Activated naive CD4-positive, alpha-beta T cell treated with anti-CD3 and anti-CD28 coated beads for 36 hours (primary cell): ENCODE measurements at regions of chr1 and their contacts with region 1.

Region 1: DNA sequence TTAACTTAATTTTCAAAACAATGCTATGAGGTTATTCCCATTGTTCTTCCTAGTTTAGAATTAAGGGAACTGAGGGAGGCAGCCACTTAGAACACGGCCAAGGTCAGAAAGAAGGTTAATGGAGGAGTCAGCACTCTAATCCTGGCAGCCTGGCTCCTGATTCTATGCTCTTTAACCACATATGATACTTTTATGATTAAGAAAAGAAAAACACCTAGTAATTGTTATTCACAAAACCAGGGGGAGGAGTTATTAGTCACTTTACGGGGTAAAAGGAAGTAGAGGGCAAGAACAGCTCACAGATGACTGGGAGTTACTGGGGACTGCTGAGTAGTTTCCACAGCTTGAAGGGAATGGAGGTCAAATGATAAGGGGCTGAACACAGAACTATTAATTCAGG is 38.6 kb downstream of the GADD45A start:
- DNase-seq: peak; percentile 58
- H3K4me3 Mint-ChIP-seq: no peak overlapping the region
- H3K27ac Mint-ChIP-seq: no peak overlapping the region
- H3K4me1 Mint-ChIP-seq: peaks cover 8% of the 10 kb centered on the region
- H3K27me3 Mint-ChIP-seq: no peaks in the 10 kb centered on the region

Region 2: DNA sequence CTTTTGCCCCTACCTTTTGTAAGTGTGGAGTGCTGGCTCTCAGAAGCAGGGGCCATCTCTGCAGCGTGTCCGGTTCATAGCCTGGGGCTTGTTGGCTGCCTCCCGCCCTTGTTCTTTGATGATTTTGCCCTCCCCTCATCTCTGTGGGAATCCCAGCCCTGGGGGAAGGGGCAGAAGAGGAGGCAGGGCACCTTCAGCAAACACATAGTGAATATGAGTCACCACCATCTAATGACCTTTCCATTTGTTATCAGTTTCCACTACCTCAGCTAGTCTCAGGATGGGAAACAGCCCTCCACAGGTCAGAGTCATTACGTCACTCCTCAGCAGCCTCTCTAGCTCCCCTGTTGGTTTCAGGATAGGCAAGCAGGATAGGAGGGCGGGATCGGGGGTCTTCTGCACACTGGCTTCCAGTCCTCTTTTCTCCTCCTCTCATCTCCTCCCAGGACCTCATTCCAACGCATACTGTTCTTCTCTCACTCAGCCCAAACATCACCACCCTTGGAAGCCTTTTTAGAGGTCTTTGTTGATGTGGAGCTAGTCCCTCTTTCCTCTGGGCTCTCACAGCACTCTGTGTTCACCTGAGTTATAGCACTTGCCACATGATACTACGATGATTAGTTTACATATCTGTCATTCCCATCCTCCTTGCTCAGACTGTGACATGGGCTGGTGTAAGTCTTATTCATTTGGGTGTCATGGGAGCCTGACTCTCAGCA is 22.8 kb before region 1 on chr1:
- CTCF ChIA-PET with region 1: no interaction called
- intact Hi-C with region 1: loop called (anchors 1 kb)
- DNase-seq: peak; percentile 50
- H3K4me3 Mint-ChIP-seq: no peak overlapping the region
- H3K27ac Mint-ChIP-seq: no peak overlapping the region
- H3K4me1 Mint-ChIP-seq: peaks cover 13% of the 10 kb centered on the region
- H3K27me3 Mint-ChIP-seq: no peaks in the 10 kb centered on the region

Region 3: GRCh38 chr1:67735806-67736627 is 12.4 kb after region 1 on chr1:
- CTCF ChIA-PET with region 1: no interaction called
- intact Hi-C with region 1: loop called (anchors 1 kb)
- DNase-seq: peak; percentile 73
- H3K4me3 Mint-ChIP-seq: peak overlapping the region; percentile 53
- H3K27ac Mint-ChIP-seq: peak overlapping the region; percentile 74
- H3K4me1 Mint-ChIP-seq: peaks cover 16% of the 10 kb centered on the region
- H3K27me3 Mint-ChIP-seq: peaks cover 4% of the 10 kb centered on the region

Region 4: GRCh38 chr1:67748630-67749029 is 25.0 kb after region 1 on chr1:
- CTCF ChIA-PET with region 1: interaction called, 3 read pairs
- intact Hi-C with region 1: loop called (anchors 2 kb)
- DNase-seq: no peak
- H3K4me3 Mint-ChIP-seq: no peak overlapping the region
- H3K27ac Mint-ChIP-seq: no peak overlapping the region
- H3K4me1 Mint-ChIP-seq: peaks cover 21% of the 10 kb centered on the region
- H3K27me3 Mint-ChIP-seq: no peaks in the 10 kb centered on the region

Region 5: GRCh38 chr1:68016381-68016780 is 292.8 kb after region 1 on chr1:
- CTCF ChIA-PET with region 1: no interaction called
- intact Hi-C with region 1: no loop called
- DNase-seq: no peak
- H3K4me3 Mint-ChIP-seq: no peak overlapping the region
- H3K27ac Mint-ChIP-seq: no peak overlapping the region
- H3K4me1 Mint-ChIP-seq: no peaks in the 10 kb centered on the region
- H3K27me3 Mint-ChIP-seq: no peaks in the 10 kb centered on the region